ENCODE measurements at regions of chr1 and their contacts with region 1.

Region 1: DNA sequence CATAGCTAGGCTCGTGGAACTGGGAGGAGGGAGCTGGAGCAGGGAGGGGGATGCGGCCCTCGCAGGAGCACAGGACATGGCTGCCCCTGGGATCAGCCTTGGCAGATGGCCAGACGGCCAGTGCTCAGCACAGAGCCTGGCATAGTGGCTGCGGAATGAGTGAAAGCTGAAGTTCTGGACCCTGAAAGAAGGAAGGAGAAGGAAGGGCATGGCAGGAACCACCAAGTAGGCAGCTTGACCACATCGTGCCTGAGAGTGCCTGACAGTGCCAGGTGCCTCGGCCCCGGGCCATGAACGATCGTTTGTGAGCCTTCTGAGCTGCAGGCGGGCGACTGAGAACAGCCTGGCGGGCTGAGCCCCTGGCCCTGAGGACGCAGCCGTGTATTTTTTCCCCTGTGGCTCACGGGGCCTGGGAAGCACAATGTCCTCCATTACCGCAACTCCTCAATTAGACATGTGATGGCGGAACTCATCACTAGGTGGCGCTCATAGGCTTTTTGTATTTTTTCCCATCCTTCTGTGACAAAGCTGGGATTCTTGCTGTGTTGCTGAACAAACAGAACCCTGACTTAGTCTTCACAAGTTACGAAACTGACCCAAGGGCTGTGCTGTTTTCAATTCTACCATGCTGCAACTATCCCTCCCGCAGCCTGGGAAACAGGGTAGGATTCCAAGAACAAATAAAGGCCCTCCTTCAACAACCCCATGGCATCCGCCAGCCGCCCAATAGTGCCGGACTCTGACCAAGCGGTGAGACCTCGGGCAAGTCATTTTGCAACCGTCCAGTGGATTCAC is 29.9 kb upstream of the TMEM61 start:
- DNase-seq: peak; percentile 29 to 72 (median 59)
- H3K4me3 ChIP-seq: no peak overlapping the region
- H3K27ac ChIP-seq: no peak overlapping the region
- H3K4me1 ChIP-seq: peaks cover 3% of the 10 kb centered on the region
- H3K27me3 ChIP-seq: no peaks in the 10 kb centered on the region
- CTCF ChIP-seq: peak in 2 of 3 donors; percentile 42 to 47
- EP300 ChIP-seq: no peak
- POLR2A ChIP-seq: no peak

Region 2: DNA sequence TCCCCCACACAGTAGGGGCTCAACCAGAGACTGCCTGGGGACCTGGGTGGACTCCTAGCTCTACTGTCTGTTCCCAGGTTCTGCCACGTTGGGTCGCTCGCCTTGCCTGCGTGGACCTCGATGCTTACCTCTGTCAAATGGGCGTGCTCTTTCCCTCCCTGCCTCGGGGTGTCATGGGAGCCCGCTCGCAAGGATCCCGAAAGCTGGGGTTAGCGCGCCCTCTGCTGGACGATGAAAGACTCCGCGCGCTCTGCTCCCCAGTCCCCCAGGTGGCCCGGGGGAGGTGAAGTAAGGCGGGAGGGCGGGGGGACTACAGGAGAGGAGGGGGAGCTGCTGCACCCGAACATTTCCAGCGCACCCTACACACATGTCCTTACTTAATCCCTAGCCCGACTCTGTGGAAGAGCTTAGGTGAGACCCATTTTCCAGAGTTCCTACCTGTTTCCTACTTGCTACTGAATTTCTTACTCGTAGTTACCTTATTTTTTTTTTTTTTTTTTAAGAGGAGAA is 45.8 kb after region 1 on chr1:
- intact Hi-C with region 1: loop called in 2 of 4 experiments (anchors 5 to 10 kb)
- DNase-seq: peak; percentile 31 to 78 (median 46)
- H3K4me3 ChIP-seq: no peak overlapping the region
- H3K27ac ChIP-seq: no peak overlapping the region
- H3K4me1 ChIP-seq: no peaks in the 10 kb centered on the region
- H3K27me3 ChIP-seq: no peaks in the 10 kb centered on the region
- CTCF ChIP-seq: peak in 1 of 3 donors; percentile 33
- EP300 ChIP-seq: no peak
- POLR2A ChIP-seq: no peak